Aorta (tissue), 5 donors: ENCODE measurements at regions of chr13 and their contacts with region 1.

Region 1: DNA sequence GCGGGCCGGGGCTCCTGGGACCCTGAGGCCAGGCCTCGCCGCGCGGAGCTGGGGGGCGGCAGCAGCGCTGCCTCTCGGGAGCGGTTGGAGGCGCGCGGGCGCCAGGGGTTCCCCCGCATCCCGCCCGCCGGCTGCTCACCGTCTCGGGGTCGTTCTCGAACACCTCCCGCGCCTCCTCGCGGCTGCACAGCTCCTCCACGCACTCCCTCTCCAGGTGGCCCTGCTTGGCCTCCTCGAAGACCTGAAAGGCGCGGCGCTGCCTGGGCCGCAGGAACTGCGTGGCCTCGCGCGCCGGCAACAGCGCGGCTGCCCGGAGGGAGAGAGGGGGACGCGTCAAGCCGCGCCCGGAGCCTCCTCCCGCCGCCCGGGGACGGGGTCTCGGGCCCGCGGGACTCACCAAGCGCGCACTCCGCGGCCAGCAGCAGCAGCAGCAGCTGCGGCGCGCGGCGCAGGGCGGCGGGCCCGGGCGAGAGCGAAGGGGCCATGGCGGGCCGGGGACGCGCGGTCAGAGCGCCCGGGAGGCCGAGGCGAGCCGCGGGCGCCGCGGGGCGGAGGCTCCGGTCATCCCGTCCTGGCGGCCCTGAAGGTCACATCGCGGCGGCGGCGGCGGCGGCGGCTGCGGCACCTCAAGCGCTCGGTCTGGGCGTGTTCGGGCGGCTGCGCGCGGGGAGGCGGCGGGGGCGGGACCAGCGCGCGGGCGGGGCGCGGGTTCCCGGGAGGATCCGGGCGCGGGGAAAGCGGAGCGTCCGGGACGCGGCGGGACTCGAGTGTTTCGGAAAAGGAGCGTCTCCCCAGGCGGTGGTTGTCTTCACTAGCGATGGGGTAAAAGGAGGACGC is at the start of gene GAS6:
- DNase-seq: peak in 1 of 2 donors; percentile 91
- ATAC-seq: peak; percentile 69
- H3K4me3 ChIP-seq: peak within 1 kb of the TSS; percentile 77 to 95
- H3K27ac ChIP-seq: peak within 1 kb of the TSS; percentile 78 to 92
- H3K4me1 ChIP-seq: no peaks in the 10 kb centered on the region
- H3K27me3 ChIP-seq: no peaks in the 10 kb centered on the region
- total RNA-seq, gene GAS6: 317 to 348 TPM

Region 2: DNA sequence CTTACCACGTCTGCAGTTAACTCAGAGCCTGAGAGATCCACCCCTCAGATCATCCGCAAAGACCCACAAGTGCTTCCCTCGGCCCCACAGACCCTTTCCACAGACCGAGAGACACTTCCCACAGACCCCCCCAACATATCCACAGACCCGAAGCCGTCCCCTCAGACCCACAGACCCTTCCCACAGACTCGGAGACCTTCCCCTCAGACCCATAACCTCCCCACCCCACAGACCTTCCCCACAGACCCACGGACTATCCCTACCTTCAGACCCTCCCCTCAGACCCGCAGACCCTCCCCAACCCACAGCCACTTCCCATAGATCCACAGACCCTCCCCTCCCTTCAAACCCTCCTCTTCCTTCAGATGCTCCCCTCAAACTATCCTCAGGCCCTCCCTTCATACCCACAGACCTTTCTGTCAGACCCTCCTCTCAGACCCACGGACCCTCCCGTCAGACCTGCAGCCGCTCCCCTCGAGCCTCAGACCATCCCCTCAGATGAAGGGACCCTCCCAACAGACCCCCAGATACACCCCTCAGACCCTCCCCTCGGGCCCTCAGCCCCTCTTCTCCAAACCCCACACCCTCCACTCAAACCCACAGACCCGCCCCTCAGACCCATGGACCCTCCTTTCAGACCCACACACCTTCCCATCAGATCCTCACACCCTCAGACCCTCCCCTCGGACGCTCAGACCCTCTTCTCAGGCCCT is 299.2 kb before region 1 on chr13:
- intact Hi-C with region 1: no loop called
- DNase-seq: peak in 1 of 2 donors; percentile 48
- ATAC-seq: no peak
- H3K4me3 ChIP-seq: no peak overlapping the region
- H3K27ac ChIP-seq: no peak overlapping the region
- H3K4me1 ChIP-seq: no peaks in the 10 kb centered on the region
- H3K27me3 ChIP-seq: no peaks in the 10 kb centered on the region

Region 3: DNA sequence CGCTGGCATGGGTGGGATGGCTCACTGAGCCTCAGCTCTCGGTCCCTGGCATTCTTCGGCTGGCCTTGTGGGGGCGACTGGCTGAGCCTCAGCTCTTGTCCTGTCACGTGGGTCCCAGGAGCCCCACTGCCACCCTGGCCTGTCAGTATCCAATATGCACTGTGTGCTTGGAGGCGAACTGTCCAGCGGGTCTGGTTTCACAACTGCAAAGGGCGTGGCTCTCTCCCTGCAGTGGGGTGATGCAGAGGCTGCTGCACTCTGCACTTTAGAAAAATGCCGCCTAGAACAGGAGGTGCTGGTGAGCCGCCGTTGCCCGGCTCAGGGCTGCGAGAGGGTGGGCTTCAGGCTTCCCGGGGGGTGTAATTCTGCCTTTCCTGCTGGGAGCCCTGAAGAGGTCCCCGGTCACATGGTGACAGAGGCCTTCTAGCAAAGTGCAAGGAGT is 121.6 kb before region 1 on chr13:
- intact Hi-C with region 1: no loop called
- DNase-seq: peak; percentile 76 to 78
- ATAC-seq: peak; percentile 54
- H3K4me3 ChIP-seq: no peak overlapping the region
- H3K27ac ChIP-seq: no peak overlapping the region
- H3K4me1 ChIP-seq: no peaks in the 10 kb centered on the region
- H3K27me3 ChIP-seq: no peaks in the 10 kb centered on the region

Region 4: GRCh38 chr13:113816946-113817859 is 46.5 kb before region 1 on chr13:
- intact Hi-C with region 1: loop called in 1 of 2 experiments (anchors 5 kb)
- DNase-seq: peak; percentile 94 to 96
- ATAC-seq: peak; percentile 59
- H3K4me3 ChIP-seq: no peak overlapping the region
- H3K27ac ChIP-seq: peak overlapping the region in 1 of 2 donors; percentile 37
- H3K4me1 ChIP-seq: no peaks in the 10 kb centered on the region
- H3K27me3 ChIP-seq: no peaks in the 10 kb centered on the region

Region 5: DNA sequence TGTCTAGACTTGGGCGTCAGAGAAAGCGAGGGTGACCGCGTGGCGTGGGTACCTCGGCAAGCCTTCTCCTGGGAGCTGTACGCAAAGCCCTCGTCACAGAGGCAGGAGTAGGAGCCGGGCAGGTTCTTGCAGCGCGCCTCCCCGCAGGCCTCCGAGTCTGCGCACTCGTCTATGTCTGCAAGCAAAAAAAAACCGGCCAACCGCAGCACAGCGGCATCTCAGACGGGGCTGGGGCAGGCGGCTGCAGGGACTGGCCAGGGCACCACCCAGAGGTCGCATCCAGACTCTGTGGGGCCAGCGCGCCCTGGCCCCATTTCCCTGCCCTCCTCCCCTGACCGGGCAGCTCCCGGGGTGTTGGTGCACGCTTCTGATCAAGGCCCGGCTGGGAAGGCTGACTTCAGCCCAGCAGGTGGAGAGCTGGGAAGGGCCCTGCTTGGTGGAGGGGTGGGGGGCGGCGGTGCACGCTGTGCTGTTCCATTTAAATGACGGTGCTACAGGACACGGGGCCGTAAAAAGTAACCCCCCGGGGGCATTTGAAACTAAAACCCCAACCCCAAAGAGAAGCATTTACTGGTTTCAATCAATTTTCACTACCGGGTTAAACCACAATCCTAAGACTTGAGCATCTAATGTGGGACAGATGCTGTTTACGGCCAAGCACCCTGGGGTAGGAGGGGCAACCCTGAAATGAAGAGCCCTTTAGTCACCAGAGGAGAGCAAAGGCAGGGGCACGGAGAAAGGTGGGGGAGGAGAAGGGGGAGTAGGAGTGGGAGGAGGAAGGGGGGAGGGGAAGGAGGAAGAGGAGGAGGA is 28.0 kb before region 1 on chr13:
- intact Hi-C with region 1: loop called in 1 of 2 experiments (anchors 2 kb)
- DNase-seq: peak in 1 of 2 donors; percentile 44
- ATAC-seq: no peak
- H3K4me3 ChIP-seq: no peak overlapping the region
- H3K27ac ChIP-seq: no peak overlapping the region
- H3K4me1 ChIP-seq: no peaks in the 10 kb centered on the region
- H3K27me3 ChIP-seq: no peaks in the 10 kb centered on the region

Region 6: DNA sequence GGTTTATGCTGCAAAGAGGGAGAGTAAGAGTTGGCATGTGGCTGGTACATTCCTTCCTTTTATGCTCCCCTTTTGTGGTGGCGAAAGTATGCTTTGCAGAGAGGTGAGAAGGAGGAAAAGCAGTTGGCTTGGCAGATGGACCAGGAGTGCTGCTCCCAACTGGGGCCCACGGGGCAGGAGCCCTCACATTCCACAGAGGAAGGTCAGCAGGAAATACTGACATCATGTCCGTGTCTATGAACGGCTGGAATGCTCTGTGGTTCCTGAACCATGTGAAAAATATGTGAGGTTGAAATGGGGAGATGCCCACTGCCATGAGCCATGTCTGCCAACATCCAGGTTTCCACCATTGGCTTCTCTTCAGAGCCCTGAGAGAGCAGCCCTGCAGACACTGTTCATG is 33.5 kb after region 1 on chr13:
- intact Hi-C with region 1: loop called in 1 of 2 experiments (anchors 5 kb)
- DNase-seq: no peak
- ATAC-seq: no peak
- H3K4me3 ChIP-seq: no peak overlapping the region
- H3K27ac ChIP-seq: peak overlapping the region in 1 of 2 donors; percentile 7
- H3K4me1 ChIP-seq: peaks cover 0 to 6% of the 10 kb centered on the region in 2 donors
- H3K27me3 ChIP-seq: no peaks in the 10 kb centered on the region

Region 7: GRCh38 chr13:113928685-113929627 is 65.3 kb after region 1 on chr13:
- intact Hi-C with region 1: loop called in 1 of 2 experiments (anchors 5 kb)
- DNase-seq: peak; percentile 91 to 92
- ATAC-seq: peak; percentile 87
- H3K4me3 ChIP-seq: no peak overlapping the region
- H3K27ac ChIP-seq: peak overlapping the region in 1 of 2 donors; percentile 73
- H3K4me1 ChIP-seq: no peaks in the 10 kb centered on the region
- H3K27me3 ChIP-seq: no peaks in the 10 kb centered on the region

Region 8: GRCh38 chr13:113935001-113935844 is 71.6 kb after region 1 on chr13:
- intact Hi-C with region 1: loop called in 1 of 2 experiments (anchors 5 kb)
- DNase-seq: peak; percentile 74 to 85
- ATAC-seq: peak; percentile 60
- H3K4me3 ChIP-seq: no peak overlapping the region
- H3K27ac ChIP-seq: peak overlapping the region; percentile 60 to 68
- H3K4me1 ChIP-seq: no peaks in the 10 kb centered on the region
- H3K27me3 ChIP-seq: no peaks in the 10 kb centered on the region